Activated T-helper 1 cell treated with anti-CD3 and anti-CD28 coated beads, Interleukin-12 subunit alpha, Interleukin-12 subunit beta, Interleukin-2, Interleukin-4 antibody, amounts not matched to agents 30 ng/mL and 10 ng/mL and 1 ng/mL, durations not matched to agents 14 hours and 24 hours and 36 hours (primary cell): ENCODE measurements at regions of chr12 and their contacts with region 1.

Region 1: DNA sequence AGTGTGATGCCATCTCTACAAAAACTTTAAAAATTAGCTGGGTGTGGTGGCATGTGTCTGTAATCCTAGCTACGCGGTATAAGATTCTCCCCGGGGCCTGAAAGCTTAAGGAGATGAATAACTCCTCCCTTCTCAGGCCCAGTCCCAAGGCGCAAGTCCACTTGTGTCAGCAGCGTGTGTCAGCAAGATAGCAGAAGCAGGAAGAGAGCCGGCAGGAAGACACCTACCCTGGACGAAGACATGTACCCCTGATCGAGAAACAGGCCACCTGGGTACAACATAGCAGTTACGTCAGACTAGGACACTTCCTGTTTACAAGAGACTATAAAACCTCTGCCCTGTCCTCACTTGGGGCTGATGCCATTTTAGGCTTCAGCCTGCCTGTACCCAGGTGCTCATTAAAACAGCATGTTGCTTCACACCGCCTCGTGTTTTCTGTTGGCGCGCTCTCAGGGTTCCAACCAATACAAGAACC is 43.3 kb downstream of the CPM start:
- DNase-seq: no peak
- H3K4me3 Mint-ChIP-seq: no peak overlapping the region
- H3K27ac Mint-ChIP-seq: no peak overlapping the region
- H3K4me1 Mint-ChIP-seq: peaks cover 45% of the 10 kb centered on the region
- H3K27me3 Mint-ChIP-seq: no peaks in the 10 kb centered on the region

Region 2: GRCh38 chr12:68919581-68920239 is 30.0 kb after region 1 on chr12:
- intact Hi-C with region 1: loop called (anchors 1 kb)
- DNase-seq: no peak
- H3K4me3 Mint-ChIP-seq: no peak overlapping the region
- H3K27ac Mint-ChIP-seq: no peak overlapping the region
- H3K4me1 Mint-ChIP-seq: peaks cover 30% of the 10 kb centered on the region
- H3K27me3 Mint-ChIP-seq: no peaks in the 10 kb centered on the region

Region 3: DNA sequence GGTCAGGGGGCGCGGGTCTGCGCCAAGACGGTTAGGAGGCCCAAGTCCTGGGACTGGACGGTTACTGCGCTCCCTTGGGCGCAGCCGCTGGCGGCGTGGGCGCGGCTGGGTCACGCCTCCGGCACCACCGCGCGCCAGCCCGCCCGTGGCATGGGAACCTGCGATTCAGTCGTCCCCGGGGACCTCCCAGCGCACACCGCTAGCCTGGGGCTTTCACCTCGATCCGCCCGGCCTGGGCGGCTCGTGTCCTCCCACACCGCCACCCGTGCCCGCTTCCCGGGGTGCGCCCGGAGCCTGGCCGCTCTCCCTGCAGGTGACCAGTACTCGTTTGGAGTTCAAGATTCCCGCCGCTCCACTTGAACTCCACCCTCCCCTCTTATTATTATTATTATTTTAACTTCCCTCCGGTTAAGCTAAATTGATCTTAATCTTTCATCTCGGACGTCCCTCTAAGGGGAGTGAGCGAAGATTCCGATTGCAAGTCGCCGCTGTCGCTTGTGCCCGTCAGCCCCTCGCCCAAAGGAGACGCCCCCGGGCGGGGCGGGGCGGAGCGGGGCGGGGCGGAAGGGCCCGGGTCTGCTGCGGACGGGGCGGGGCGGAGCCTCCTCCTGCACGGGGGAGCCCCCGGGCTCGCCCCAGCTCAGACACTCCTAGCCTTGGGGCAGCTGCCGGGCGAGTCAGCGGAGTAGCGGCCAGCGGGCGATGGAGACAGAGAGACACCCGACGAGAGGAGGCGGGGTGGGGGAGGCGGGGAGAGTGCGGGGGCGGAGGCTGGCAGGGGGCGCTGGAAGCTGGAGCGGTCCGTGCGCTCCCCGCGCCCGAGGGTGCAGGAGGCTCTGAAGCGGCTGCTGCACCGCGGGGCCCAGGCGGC is 1476.2 kb after region 1 on chr12 and contains the start of gene KCNMB4:
- intact Hi-C with region 1: no loop called
- DNase-seq: peak; percentile 71
- H3K4me3 Mint-ChIP-seq: peak within 1 kb of the TSS; percentile 87
- H3K27ac Mint-ChIP-seq: peak within 1 kb of the TSS; percentile 63
- H3K4me1 Mint-ChIP-seq: peaks cover 20% of the 10 kb centered on the region
- H3K27me3 Mint-ChIP-seq: peaks cover 44% of the 10 kb centered on the region
- total RNA-seq, gene KCNMB4: 0.17 and 0.80 TPM in 2 replicates